Activated CD8-positive, alpha-beta memory T cell treated with anti-CD3 and anti-CD28 coated beads, Interleukin-2, amount 10 ng/mL, durations not matched to agents 7 days and 5 days (primary cell): ENCODE measurements at regions of chr16 and their contacts with region 1.

Region 1: GRCh38 chr16:24253192-24253591 is 2.9 kb upstream of the CACNG3 start:
- DNase-seq: peak; percentile 50
- ATAC-seq: peak; percentile 49
- H3K4me3 Mint-ChIP-seq: no peak overlapping the region
- H3K27ac Mint-ChIP-seq: no peak overlapping the region
- H3K4me1 Mint-ChIP-seq: no peaks in the 10 kb centered on the region
- H3K27me3 Mint-ChIP-seq: peaks cover 62% of the 10 kb centered on the region

Region 2: DNA sequence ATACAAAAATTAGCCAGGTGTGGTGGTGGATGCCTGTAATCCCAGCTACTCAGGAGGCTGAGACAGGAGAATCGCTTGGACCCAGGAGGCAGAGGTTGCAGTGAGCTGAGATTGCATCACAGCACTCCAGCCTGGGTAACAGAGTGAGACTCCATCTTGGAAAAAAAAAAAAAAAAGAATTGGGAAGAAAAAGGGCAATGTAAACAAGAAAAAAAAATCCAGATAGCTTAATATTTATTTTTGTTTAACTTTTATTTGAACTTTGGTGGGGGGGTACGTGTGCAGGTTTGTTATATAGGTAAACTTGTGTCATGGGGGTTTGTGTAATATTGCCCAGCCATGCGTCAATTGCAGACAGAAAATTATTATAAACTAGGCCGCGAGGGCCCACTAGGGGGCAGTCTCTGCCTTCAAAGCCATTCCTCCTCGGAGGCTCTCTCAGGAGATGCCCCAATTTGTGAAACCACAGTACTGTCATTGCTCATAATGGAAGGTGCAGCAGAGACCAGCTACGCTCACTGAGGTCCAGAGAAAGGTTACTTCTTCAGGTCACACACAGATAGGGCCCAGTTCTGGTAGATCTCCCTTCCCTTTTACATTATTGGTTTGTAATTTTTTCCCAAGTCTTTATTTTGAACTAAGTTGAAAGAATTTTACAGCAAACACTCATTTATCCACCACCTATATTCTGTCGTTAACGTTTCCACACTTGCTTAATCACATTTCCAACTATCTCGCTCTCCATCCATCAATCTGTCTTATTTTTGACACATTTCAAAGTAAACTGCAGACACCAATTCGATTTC is 211.2 kb before region 1 on chr16:
- CTCF ChIA-PET with region 1: interaction called, 18 read pairs
- DNase-seq: peak; percentile 87
- ATAC-seq: peak; percentile 94
- H3K4me3 Mint-ChIP-seq: no peak overlapping the region
- H3K27ac Mint-ChIP-seq: no peak overlapping the region
- H3K4me1 Mint-ChIP-seq: peaks cover 7% of the 10 kb centered on the region
- H3K27me3 Mint-ChIP-seq: no peaks in the 10 kb centered on the region

Region 3: DNA sequence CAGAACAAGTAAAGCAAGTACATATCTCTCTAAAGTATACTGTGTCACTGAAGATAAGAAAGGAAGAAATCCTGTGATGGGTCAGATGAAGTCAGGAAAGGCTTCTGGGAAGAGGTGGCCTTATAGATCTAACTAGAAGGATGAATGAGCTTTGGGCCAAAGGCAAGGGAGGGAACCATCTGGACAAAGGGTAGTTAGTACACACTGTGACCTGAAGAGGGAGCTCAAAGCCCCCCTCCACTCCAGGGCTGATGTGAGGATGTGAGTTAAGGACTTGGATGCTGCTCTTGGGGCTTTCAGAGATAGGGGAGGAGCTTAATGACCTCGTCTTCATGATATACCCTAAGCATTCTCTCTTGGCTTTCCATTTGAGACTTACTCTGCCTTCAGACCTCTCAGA is 182.3 kb before region 1 on chr16:
- CTCF ChIA-PET with region 1: interaction called, 41 read pairs
- DNase-seq: peak; percentile 63
- ATAC-seq: peak; percentile 80
- H3K4me3 Mint-ChIP-seq: no peak overlapping the region
- H3K27ac Mint-ChIP-seq: peak overlapping the region; percentile 8
- H3K4me1 Mint-ChIP-seq: peaks cover 30% of the 10 kb centered on the region
- H3K27me3 Mint-ChIP-seq: no peaks in the 10 kb centered on the region

Region 4: GRCh38 chr16:24151482-24151939 is 101.7 kb before region 1 on chr16:
- CTCF ChIA-PET with region 1: no interaction called
- DNase-seq: no peak
- ATAC-seq: peak; percentile 51
- H3K4me3 Mint-ChIP-seq: no peak overlapping the region
- H3K27ac Mint-ChIP-seq: peak overlapping the region; percentile 27
- H3K4me1 Mint-ChIP-seq: peaks cover 37% of the 10 kb centered on the region
- H3K27me3 Mint-ChIP-seq: no peaks in the 10 kb centered on the region